Naive thymus-derived CD8-positive, alpha-beta T cell (primary cell): ENCODE measurements at regions of chr1 and their contacts with region 1.

Region 1: DNA sequence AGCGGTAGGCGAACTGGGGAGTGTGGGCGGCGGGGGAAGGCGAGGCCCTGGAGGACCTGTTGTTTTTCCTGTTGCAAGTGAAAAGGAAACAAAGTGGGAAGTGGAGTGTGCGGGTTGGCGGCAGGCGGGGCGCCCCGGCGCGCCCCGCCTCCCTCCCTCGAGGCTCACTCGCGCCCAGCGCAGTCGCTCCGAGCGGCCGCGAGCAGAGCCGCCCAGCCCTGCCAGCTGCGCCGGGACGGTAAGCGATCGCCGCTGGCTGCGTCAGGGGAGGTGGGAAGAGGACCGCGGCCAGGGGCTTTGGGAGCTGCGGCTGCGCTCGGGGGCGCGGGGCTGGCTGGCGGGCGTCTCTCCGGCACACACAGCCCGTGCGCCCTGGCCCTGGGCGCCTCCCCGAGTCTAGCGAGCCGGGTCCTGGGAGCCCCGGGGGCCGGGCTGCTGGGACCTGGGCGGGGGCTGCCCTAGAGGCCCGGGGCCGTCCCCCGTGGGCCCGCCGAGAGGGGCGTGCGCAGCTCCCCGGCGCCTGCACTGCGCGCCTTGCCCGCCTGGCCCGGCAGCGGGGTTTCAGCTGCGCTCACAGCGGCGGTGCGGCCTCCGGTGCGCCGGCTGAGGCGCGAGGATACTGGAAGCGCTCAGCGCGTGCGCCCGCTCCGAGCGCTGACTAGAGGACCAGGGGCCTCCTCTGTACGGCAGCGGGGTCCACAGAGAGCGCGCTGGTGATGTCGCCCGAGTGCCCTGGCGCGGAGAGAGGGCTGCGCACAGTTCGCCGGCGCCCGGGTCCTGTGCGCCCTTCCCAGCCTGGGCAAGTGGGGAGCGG is at the start of gene PIK3CD:
- DNase-seq: peak in 8 of 10 donors; percentile 23 to 52 (median 36)
- ATAC-seq: peak; percentile 24 to 44
- H3K4me3 Mint-ChIP-seq: peak within 1 kb of the TSS; percentile 95 to 100 (median 100)
- H3K27ac Mint-ChIP-seq: peak within 1 kb of the TSS; percentile 97 to 100 (median 99)
- H3K4me1 Mint-ChIP-seq: peaks cover 24 to 82% (median 79%) of the 10 kb centered on the region in 4 donors
- H3K27me3 Mint-ChIP-seq: no peaks in the 10 kb centered on the region
- polyA plus RNA-seq, gene PIK3CD: 56.8 to 166 (median 87.4) TPM

Region 2: GRCh38 chr1:9573723-9574122 is 78.0 kb before region 1 on chr1:
- POLR2A ChIA-PET with region 1: no interaction called
- DNase-seq: peak in 2 of 10 donors; percentile 31 to 34
- ATAC-seq: no peak
- H3K4me3 Mint-ChIP-seq: no peak overlapping the region
- H3K27ac Mint-ChIP-seq: peak overlapping the region in 1 of 10 donors; percentile 39
- H3K4me1 Mint-ChIP-seq: peaks cover 0 to 6% (median 0%) of the 10 kb centered on the region in 4 donors
- H3K27me3 Mint-ChIP-seq: no peaks in the 10 kb centered on the region

Region 3: GRCh38 chr1:9671377-9672140 is 19.8 kb after region 1 on chr1:
- POLR2A ChIA-PET with region 1: interaction called, 1,921 read pairs
- DNase-seq: peak in 1 of 10 donors; percentile 23
- ATAC-seq: peak; percentile 45 to 55
- H3K4me3 Mint-ChIP-seq: peak overlapping the region in 9 of 10 donors; percentile 24 to 64 (median 45)
- H3K27ac Mint-ChIP-seq: peak overlapping the region; percentile 70 to 90 (median 81)
- H3K4me1 Mint-ChIP-seq: peaks cover 32 to 87% (median 77%) of the 10 kb centered on the region in 4 donors
- H3K27me3 Mint-ChIP-seq: no peaks in the 10 kb centered on the region

Region 4: GRCh38 chr1:9689011-9689706 is 37.4 kb after region 1 on chr1:
- POLR2A ChIA-PET with region 1: interaction called, 303 read pairs
- DNase-seq: peak; percentile 70 to 96 (median 83)
- ATAC-seq: peak; percentile 67 to 77
- H3K4me3 Mint-ChIP-seq: peak overlapping the region; percentile 79 to 95 (median 86)
- H3K27ac Mint-ChIP-seq: peak overlapping the region; percentile 76 to 92 (median 88)
- H3K4me1 Mint-ChIP-seq: peaks cover 31 to 84% (median 79%) of the 10 kb centered on the region in 4 donors
- H3K27me3 Mint-ChIP-seq: no peaks in the 10 kb centered on the region

Region 5: DNA sequence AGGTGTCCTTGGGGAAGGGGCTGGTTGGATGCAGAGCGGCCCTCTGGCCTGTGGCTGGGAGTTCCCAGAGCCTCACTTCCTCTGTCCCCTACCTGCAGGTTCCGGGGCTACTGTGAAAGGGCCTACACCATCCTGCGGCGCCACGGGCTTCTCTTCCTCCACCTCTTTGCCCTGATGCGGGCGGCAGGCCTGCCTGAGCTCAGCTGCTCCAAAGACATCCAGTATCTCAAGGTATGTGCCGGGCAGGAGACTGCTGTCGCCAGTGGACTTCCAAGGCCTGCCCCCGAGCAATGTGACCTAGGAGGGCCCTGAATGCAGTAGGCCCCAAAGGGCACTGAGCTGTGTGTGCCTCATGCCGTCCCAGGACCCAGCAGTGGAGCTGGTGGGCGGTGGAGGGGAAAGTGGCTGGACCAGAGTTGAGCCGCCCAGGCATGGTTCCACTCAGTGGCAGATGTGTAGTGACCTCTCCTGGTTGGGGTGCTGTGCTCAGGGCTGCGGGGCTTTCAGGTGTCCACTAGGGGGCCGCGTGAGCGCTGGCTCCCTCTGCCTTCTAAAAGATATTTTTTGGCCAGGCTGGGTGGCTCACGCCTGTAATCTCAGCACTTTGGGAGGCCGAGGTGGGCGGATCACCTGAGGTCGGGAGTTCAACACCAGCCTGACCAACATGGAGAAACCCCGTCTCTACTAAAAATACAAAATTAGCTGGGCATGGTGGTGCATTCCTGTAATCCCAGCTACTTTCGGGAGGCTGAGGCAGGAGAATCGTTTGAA is 73.1 kb after region 1 on chr1:
- POLR2A ChIA-PET with region 1: interaction called, 811 read pairs
- DNase-seq: peak; percentile 49 to 82 (median 68)
- ATAC-seq: peak; percentile 13 to 16
- H3K4me3 Mint-ChIP-seq: peak overlapping the region in 7 of 10 donors; percentile 10 to 83 (median 53)
- H3K27ac Mint-ChIP-seq: peak overlapping the region; percentile 62 to 92 (median 84)
- H3K4me1 Mint-ChIP-seq: peaks cover 27 to 85% (median 71%) of the 10 kb centered on the region in 4 donors
- H3K27me3 Mint-ChIP-seq: no peaks in the 10 kb centered on the region

Region 6: GRCh38 chr1:9730096-9730901 is 78.5 kb after region 1 on chr1:
- POLR2A ChIA-PET with region 1: interaction called, 27 read pairs
- DNase-seq: peak in 1 of 10 donors; percentile 64
- ATAC-seq: no peak
- H3K4me3 Mint-ChIP-seq: peak overlapping the region; percentile 25 to 82 (median 75)
- H3K27ac Mint-ChIP-seq: peak overlapping the region in 9 of 10 donors; percentile 74 to 97 (median 92)
- H3K4me1 Mint-ChIP-seq: peaks cover 35 to 84% (median 74%) of the 10 kb centered on the region in 4 donors
- H3K27me3 Mint-ChIP-seq: no peaks in the 10 kb centered on the region

Region 7: DNA sequence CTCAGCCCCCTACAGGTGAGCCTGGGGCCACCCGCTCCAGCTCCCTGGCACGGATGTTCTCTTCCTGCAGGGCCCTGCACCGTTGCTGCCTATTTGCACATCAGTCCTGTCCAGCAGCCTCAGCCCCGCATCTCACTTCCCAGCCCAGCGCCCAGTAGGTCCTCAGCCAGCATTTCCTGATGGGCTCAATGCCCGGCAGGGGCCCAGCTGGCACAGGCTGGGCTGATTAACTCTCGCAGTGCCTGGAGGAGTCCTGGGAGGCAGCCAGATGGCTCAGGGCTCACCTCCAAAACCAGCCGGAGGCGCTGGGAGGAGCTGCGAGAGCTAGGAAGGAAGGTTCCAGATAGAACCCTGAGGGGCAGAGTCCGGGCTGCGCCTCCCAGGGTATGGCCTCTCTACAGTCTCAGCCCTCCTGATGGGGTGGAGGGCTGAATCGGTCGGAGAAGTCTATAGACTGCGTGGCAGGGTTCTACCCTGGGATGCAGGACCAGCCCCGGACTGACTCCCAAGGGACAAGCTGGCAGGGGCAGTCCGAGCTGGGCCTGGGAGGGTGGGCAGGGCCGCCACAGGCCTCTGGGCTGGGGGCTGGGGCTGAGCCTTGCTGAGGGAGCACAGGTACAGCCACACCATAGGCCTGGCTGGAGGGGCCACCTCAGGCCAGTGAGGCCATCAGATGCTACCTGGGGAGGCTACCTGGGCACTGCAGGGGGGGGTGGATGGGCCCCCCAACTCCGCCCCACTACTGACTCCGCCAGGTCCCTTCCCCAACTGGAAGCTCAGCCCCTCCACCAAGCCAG is 191.2 kb after region 1 on chr1:
- POLR2A ChIA-PET with region 1: no interaction called
- DNase-seq: no peak
- ATAC-seq: no peak
- H3K4me3 Mint-ChIP-seq: no peak overlapping the region
- H3K27ac Mint-ChIP-seq: no peak overlapping the region
- H3K4me1 Mint-ChIP-seq: peaks cover 0 to 6% (median 1%) of the 10 kb centered on the region in 4 donors
- H3K27me3 Mint-ChIP-seq: no peaks in the 10 kb centered on the region